Gastrocnemius medialis (tissue), 4 donors: ENCODE measurements at regions of chr4 and their contacts with region 1.

Region 1: DNA sequence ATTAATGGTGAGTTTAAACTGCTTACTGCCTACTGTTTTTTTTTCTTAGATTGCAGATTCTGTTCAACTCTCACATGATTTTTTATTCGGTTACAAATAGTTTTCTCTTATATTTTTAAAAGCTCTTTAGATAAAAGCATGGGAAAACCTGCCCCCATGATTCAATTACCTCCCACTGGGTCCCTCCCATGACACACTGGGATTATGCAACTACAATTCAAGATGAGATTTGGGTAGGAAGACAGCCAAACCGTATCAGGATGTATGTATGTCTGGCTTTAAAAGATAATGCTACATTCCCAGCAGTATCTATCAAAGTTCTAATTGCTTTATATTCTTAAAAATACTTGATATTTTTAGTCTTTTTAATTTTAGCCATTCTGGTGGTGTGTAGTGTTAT is 131.5 kb downstream of the JADE1 start:
- DNase-seq: no peak
- ATAC-seq: no peak
- H3K4me3 ChIP-seq: no peak overlapping the region
- H3K27ac ChIP-seq: no peak overlapping the region
- H3K4me1 ChIP-seq: no peaks in the 10 kb centered on the region
- H3K27me3 ChIP-seq: no peaks in the 10 kb centered on the region
- CTCF ChIP-seq: no peak
- POLR2A ChIP-seq: no peak

Region 2: DNA sequence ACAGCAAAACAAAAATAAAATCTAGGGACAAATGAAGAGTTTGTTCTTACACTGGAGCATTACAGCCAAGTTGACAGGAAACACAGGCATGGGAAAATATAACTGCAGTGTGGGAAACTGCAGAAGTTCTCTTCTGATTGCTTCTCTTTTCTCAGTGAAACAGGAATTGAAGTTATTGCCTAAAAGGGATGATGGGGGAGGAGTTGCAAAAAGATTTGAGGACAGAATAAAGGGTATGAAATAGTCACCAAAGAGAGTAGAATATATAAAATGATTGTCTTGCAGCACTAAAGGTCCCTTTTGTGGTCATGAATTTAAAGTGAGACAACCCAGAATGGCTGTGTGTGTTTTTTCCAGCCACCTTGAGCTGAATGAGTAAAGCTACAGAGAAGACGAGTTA is 27.7 kb before region 1 on chr4:
- in situ Hi-C with region 1: no loop called
- intact Hi-C with region 1: loop called (anchors 2 kb)
- DNase-seq: no peak
- ATAC-seq: no peak
- H3K4me3 ChIP-seq: no peak overlapping the region
- H3K27ac ChIP-seq: no peak overlapping the region
- H3K4me1 ChIP-seq: no peaks in the 10 kb centered on the region
- H3K27me3 ChIP-seq: no peaks in the 10 kb centered on the region
- CTCF ChIP-seq: no peak
- POLR2A ChIP-seq: no peak

Region 3: DNA sequence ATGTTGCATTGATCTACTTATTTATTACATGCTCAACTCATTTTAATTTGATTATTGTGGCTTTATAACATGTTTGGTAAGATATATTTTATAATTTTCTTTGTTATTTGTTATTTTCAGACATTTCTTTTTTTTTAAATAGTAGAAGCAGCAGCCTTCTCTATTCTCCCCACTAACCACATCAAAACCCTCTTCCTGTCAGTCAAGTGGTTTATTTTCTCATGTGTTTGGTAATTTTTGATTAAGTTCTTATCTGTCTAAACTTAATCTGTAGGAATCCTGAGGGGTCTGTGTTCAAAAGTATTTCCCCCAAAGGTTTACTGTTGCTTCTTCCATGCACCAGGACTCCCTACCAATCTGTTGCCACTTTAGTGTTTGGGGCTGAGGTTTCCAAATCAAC is 20.4 kb after region 1 on chr4:
- in situ Hi-C with region 1: no loop called
- intact Hi-C with region 1: no loop called
- DNase-seq: no peak
- ATAC-seq: no peak
- H3K4me3 ChIP-seq: no peak overlapping the region
- H3K27ac ChIP-seq: no peak overlapping the region
- H3K4me1 ChIP-seq: no peaks in the 10 kb centered on the region
- H3K27me3 ChIP-seq: no peaks in the 10 kb centered on the region
- CTCF ChIP-seq: no peak
- POLR2A ChIP-seq: no peak

Region 4: GRCh38 chr4:129138762-129139496 is 198.0 kb after region 1 on chr4:
- in situ Hi-C with region 1: no loop called
- intact Hi-C with region 1: no loop called
- DNase-seq: no peak
- ATAC-seq: no peak
- H3K4me3 ChIP-seq: no peak overlapping the region
- H3K27ac ChIP-seq: no peak overlapping the region
- H3K4me1 ChIP-seq: no peaks in the 10 kb centered on the region
- H3K27me3 ChIP-seq: no peaks in the 10 kb centered on the region
- CTCF ChIP-seq: no peak
- POLR2A ChIP-seq: no peak